ENCODE measurements at regions of chr2 and their contacts with region 1.

Region 1: GRCh38 chr2:33620-34019 is 12.7 kb downstream of the FAM110C start:
- DNase-seq: peak; percentile 89
- H3K4me3 Mint-ChIP-seq: peak overlapping the region; percentile 14
- H3K27ac Mint-ChIP-seq: peak overlapping the region; percentile 79
- H3K4me1 Mint-ChIP-seq: peaks cover 34% of the 10 kb centered on the region
- H3K27me3 Mint-ChIP-seq: no peaks in the 10 kb centered on the region
- CTCF ChIP-seq: no peak

Region 2: DNA sequence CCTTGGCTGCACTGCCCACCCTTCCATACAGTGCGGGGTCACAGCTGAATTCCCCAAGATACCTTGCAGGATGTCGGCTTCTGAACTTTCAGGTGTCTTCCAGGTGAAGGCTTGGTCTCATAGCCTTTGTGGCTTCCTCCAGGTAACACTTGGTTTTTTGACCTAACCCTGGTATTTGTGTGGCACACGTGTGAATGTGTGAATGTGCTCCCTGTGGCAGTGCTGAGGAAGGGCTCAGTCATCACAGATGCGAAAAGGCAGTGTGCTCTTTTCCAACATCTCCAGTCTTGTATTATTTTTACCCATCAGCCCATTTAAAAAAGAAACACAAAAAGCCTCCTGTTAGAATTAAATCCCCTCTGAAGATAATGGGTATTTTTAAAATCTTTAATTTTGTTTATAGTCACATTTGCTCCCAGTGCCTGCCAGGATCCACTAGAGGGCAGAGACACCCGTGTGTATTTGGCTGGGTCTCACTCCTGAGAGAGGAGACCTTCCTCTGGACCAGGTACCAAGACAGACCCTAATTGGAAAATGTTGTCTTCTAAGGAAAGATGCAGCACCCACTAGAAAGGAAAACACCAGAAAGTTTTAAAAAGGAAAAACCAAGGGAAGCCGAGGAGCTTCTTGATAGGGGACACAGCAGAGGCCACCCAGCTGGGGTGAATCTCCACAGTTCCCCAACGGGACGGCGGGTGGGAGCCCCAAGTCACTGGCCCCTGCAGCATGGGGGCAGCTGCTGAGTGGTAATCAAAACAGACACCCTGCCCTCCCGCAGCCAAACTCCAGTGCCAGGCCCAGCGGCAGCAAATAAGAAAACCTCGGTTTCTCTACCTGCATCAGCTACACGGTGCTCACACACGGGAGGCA is 15.0 kb before region 1 on chr2:
- CTCF ChIA-PET with region 1: interaction called, 29 read pairs
- POLR2A ChIA-PET with region 1: interaction called, 7 read pairs
- intact Hi-C with region 1: no loop called
- DNase-seq: peak; percentile 46
- H3K4me3 Mint-ChIP-seq: no peak overlapping the region
- H3K27ac Mint-ChIP-seq: no peak overlapping the region
- H3K4me1 Mint-ChIP-seq: peaks cover 9% of the 10 kb centered on the region
- H3K27me3 Mint-ChIP-seq: no peaks in the 10 kb centered on the region
- CTCF ChIP-seq: peak; percentile 74

Region 3: DNA sequence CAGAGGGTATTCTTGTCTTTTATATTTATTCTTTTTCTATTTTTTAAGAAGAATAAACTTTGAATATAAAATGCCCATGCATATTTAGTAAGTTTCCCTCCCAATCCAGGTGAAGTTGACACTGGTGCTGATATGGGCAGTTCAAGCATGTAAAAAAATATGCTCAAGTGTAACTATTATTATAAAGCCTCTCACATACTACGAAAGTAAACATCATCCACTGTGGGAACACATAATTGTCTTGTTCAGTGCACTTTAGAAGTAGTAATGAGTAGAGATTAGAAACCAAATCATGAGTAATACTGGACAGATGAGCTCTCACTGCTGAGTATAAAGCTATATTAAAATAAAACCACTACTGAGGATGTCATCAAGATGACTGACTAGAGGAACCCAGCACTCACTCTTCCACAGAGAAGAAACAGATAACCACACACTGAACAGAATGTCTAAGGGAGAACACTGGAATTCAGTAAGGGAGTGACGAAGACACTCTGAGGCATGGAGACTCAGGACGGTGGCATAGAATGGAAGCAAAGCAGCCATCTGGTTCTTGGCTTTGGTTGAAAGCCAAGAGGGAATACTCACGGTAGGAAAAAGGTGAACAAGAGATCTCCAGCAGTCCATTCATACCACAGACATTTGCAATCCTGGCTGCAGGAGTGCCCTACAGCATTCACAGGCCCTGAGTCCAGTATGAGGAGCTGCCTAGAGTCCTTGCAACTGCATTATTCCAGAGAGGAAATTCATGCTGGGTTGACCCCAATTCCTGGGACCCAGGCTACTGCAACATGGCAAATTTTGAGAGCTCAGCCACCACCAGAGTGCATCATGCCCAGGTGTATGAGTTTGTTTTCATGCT is 22.2 kb after region 1 on chr2:
- CTCF ChIA-PET with region 1: no interaction called
- POLR2A ChIA-PET with region 1: no interaction called
- intact Hi-C with region 1: no loop called
- DNase-seq: no peak
- H3K4me3 Mint-ChIP-seq: no peak overlapping the region
- H3K27ac Mint-ChIP-seq: no peak overlapping the region
- H3K4me1 Mint-ChIP-seq: peaks cover 6% of the 10 kb centered on the region
- H3K27me3 Mint-ChIP-seq: no peaks in the 10 kb centered on the region
- CTCF ChIP-seq: no peak

Region 4: GRCh38 chr2:69366-70344 is 36.0 kb after region 1 on chr2:
- CTCF ChIA-PET with region 1: interaction called, 5 read pairs
- POLR2A ChIA-PET with region 1: interaction called, 15 read pairs
- intact Hi-C with region 1: no loop called
- DNase-seq: peak; percentile 63
- H3K4me3 Mint-ChIP-seq: peak overlapping the region; percentile 39
- H3K27ac Mint-ChIP-seq: peak overlapping the region; percentile 91
- H3K4me1 Mint-ChIP-seq: peaks cover 25% of the 10 kb centered on the region
- H3K27me3 Mint-ChIP-seq: no peaks in the 10 kb centered on the region
- CTCF ChIP-seq: no peak

Measured in MCF 10A (cell line).